ENCODE measurements at regions of chr1 and their contacts with region 1.

Region 1: DNA sequence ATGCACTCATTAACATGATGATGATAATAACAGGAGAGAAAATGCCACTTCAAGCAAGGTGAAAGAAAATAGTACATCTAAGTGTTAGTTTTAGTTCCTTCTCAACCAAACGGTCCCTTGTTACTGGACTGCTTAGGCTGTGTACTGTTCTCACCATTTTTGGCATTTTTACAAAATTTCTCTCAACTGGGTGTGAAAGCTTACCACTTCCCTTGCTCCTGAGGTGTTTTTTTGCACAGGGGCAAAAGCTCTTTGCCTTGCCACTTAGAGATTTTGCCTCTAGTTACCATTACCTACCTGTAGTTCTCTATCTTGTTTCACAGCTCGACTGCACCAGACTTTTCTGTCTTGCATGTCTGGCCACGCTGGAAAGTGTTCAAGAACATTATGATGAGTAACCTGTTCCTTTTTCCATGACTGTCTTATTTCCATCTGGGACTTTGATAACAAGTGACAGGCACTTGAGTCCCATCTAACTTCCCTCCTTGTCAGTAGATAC is 10.7 kb downstream of the NEK7 start:
- DNase-seq: peak; percentile 43
- ATAC-seq: peak; percentile 50
- H3K4me3 Mint-ChIP-seq: peak overlapping the region; percentile 74
- H3K27ac Mint-ChIP-seq: peak overlapping the region; percentile 95
- H3K4me1 Mint-ChIP-seq: peaks cover 83% of the 10 kb centered on the region
- H3K27me3 Mint-ChIP-seq: no peaks in the 10 kb centered on the region
- CTCF ChIP-seq: no peak

Region 2: DNA sequence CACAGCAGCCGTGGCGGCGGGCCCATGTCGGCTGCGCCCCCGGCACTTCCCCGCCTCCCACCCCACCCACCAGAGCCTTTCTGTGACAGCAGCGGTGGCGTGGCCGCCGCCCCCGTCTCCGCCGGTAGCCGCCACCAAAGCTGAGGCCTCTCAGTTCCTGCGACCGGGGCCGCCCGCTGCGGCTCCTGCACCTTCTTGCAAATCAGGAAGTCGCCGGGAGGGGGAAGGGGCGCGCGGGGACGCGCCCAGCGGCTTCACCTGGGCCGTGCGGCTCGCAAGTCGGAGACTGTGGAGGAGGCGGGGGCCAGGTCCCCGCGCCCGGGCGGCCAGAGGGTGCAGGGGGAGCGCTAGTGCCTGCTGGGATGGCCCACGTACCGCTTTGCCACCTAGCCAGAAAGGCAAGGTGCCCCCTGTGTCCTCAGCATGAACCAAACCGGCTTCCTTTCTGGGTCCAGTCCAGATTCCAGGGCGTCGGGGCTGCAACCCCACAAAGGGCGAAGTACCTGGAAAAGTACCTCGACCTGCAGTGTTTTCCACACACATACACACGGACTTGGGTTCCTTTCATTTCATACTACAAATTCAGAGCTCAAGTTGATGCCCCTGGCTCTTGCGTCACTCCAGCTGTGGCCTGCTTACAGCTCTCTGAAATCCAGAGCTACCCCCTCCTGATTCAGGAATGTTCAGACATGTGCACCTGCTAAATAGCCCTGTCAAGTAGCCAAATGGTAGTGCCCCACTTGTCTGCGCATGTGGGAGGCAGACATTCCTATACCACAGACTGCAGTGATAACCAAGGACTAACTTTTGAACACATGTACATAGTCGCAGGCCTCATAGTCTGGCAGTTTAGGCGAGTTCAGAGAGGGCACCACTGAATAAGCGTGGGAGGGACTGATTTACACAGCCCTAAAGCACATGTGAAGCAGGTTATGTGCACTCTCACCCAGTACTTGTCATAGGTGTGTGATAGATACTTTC is 391.9 kb before region 1 on chr1 and contains the start of gene DENND1B:
- CTCF ChIA-PET with region 1: no interaction called
- POLR2A ChIA-PET with region 1: no interaction called
- intact Hi-C with region 1: loop called (anchors 5 kb)
- DNase-seq: peak; percentile 90
- ATAC-seq: peak; percentile 72
- H3K4me3 Mint-ChIP-seq: peak within 1 kb of the TSS; percentile 94
- H3K27ac Mint-ChIP-seq: peak within 1 kb of the TSS; percentile 99
- H3K4me1 Mint-ChIP-seq: peaks cover 65% of the 10 kb centered on the region
- H3K27me3 Mint-ChIP-seq: no peaks in the 10 kb centered on the region
- CTCF ChIP-seq: no peak
- total RNA-seq, gene DENND1B: 10.8 to 12.7 TPM

Region 3: GRCh38 chr1:198258491-198258890 is 91.0 kb after region 1 on chr1:
- CTCF ChIA-PET with region 1: interaction called, 4 read pairs
- POLR2A ChIA-PET with region 1: interaction called, 3 read pairs
- intact Hi-C with region 1: loop called (anchors 2 kb)
- DNase-seq: no peak
- ATAC-seq: peak; percentile 72
- H3K4me3 Mint-ChIP-seq: peak overlapping the region; percentile 33
- H3K27ac Mint-ChIP-seq: peak overlapping the region; percentile 94
- H3K4me1 Mint-ChIP-seq: peaks cover 75% of the 10 kb centered on the region
- H3K27me3 Mint-ChIP-seq: no peaks in the 10 kb centered on the region
- CTCF ChIP-seq: no peak

Region 4: DNA sequence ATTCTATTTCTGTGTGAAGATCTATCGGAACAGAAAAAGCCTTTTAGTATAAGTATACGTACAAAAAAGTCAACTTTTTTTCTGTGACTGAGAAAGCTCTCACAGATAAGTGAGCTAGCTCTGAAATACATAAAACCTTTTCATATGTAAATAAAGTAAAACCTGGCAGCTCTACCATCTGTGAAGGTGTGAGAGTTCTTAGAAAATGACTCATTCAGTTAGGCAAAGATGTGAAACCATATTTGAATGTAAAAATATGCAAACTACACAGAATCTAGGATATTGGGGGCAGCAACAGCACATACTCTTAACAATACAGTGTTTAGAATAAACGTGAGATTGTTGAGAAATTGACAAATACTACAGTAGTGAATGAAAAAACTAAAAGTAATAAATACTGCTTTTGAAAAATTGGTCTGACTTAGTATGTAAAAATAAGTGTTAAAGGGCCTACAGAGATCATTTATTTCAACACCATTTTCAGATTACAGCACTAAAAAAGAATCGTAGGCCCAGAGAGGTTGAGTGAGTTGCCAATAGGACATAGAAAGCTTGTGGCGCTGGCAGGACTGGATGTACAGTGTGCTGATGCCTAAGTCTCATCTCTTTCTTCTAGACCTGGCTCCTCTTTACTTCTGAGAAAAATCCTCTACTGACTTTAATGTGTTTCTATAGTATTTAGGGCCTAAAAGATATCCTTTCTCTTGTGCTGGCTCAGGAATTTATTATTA is 353.2 kb after region 1 on chr1:
- CTCF ChIA-PET with region 1: no interaction called
- POLR2A ChIA-PET with region 1: no interaction called
- intact Hi-C with region 1: loop called (anchors 5 kb)
- DNase-seq: peak; percentile 37
- ATAC-seq: peak; percentile 60
- H3K4me3 Mint-ChIP-seq: peak overlapping the region; percentile 72
- H3K27ac Mint-ChIP-seq: peak overlapping the region; percentile 92
- H3K4me1 Mint-ChIP-seq: peaks cover 68% of the 10 kb centered on the region
- H3K27me3 Mint-ChIP-seq: no peaks in the 10 kb centered on the region
- CTCF ChIP-seq: no peak

Measured in activated CD8-positive, alpha-beta T cell treated with anti-CD3 and anti-CD28 coated beads for 36 hours (primary cell).